KBM-7 (cell line): ENCODE measurements at regions of chr1 and their contacts with region 1.

Region 1: GRCh38 chr1:184982002-184982954 is 8.0 kb upstream of the NIBAN1 start:
- DNase-seq: peak; percentile 75

Region 2: DNA sequence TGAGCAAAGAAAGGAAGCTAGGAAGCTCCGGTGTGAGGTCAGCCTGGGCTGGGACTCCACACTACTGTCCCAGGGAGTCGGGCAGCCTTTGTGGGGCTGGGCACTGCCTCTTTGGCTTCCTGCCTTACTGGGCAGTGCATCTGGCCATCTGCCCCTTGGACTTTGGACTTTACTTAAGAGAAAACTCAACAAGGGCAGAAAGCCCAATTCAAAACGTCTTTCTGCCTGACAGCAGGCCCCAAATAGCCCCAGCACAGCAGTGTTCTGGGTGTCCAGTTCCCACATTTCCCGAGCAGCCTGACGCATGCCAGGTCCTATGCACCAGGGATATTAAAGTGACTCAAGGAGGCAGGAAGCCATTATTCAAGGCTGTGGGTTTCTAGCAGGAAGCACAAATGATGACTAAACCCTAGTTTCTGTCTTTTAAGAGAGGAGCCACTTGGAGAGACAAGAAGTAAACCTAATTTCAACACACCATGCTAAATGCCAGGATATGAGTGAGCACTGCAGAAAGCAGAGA is 189.8 kb before region 1 on chr1:
- in situ Hi-C with region 1: loop called (anchors 25 kb)
- DNase-seq: peak; percentile 82

Region 3: DNA sequence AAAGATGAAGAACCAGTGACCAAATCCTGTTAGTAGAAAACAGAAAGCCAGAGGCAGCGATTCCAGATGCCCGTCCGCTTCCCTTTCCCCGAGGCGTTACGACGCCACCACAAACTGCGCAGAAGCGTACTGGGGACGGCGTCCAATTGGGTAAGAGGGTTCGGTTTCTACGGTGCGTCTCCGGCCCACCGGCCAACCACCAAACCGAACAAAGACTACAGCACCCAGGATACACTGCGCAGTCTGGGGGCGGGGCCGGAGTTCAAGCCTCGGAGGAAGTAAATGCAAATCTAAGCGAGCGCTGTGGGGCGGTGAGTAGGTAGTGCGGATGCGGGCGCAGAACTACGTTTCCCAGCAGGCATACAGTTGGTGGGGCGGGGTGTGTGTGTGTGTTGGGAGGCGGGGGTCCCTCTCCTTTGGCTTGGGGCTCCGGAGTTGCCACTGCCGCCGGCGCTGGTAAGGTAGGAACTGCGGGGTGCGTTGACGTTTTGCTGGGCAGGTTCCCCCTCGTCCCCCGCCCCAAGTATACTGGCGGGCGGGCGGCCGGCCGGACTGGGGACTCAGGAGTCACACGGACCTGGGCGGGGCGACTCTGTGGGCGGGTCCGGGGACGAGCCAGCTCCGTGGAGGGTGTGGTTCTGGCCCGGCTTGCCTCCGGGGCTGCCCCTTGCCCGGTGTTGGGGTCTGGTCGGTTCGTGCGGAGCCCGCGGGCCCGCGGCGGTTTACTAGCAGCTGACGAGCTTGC is 174.7 kb after region 1 on chr1 and contains the starts of genes SWT1 and TRMT1L:
- in situ Hi-C with region 1: loop called (anchors 25 kb)
- DNase-seq: peak; percentile 99